Ovary (tissue), 10 donors: ENCODE measurements at regions of chr6 and their contacts with region 1.

Region 1: DNA sequence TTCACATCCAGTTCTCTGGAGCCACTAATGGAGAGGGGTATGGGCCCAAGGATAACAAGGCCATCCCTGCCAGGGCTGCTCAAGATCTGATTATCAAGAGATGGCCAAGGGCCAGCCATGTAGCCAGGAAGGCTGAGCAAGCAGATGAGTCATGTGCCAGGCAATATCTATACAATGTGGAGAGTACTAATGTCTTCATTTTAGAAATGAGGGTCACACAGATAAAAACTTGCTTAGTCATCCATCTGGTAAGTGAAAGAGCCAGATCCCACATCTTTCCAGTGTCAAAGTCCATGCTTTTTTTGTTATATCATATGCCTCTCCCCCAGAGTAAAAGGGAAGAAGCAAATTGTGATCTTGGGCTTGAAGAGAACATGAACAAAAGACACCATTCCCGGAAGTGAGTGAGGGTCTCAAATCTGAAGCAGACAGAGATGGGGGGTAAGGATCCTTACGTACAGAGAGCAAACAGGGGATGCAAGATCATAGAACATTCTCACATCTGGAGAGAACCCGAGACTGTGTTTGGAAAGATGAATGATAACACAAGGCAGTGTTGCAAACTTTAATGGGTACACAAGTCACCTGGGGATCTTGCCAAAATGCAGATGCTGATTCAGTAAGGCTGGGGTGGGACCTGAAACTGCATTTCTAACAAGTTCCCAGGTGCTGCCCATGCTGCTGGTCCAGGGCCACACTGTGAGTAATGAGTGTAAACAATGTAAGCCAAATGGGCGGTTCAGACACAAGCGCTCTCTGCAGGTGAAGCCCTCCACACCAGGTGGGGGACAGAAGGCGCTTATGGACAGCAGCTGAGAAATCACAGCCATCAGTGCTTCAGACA is 20.0 kb upstream of the GSTA3 start:
- DNase-seq: no peak
- H3K4me3 ChIP-seq: no peak overlapping the region
- H3K27ac ChIP-seq: no peak overlapping the region
- H3K4me1 ChIP-seq: no peaks in the 10 kb centered on the region
- H3K27me3 ChIP-seq: no peaks in the 10 kb centered on the region
- CTCF ChIP-seq: no peak
- EP300 ChIP-seq: no peak
- POLR2A ChIP-seq: no peak

Region 2: GRCh38 chr6:54801669-54802068 is 1872.1 kb after region 1 on chr6:
- intact Hi-C with region 1: loop called in 1 of 4 experiments (anchors 10 kb)
- DNase-seq: no peak
- H3K4me3 ChIP-seq: no peak overlapping the region
- H3K27ac ChIP-seq: no peak overlapping the region
- H3K4me1 ChIP-seq: no peaks in the 10 kb centered on the region
- H3K27me3 ChIP-seq: no peaks in the 10 kb centered on the region
- CTCF ChIP-seq: no peak
- EP300 ChIP-seq: no peak
- POLR2A ChIP-seq: no peak